ENCODE measurements at regions of chr9 and their contacts with region 1.

Region 1: GRCh38 chr9:32571969-32572899 is 725 bp downstream of the NDUFB6 start:
- DNase-seq: peak; percentile 86

Region 2: DNA sequence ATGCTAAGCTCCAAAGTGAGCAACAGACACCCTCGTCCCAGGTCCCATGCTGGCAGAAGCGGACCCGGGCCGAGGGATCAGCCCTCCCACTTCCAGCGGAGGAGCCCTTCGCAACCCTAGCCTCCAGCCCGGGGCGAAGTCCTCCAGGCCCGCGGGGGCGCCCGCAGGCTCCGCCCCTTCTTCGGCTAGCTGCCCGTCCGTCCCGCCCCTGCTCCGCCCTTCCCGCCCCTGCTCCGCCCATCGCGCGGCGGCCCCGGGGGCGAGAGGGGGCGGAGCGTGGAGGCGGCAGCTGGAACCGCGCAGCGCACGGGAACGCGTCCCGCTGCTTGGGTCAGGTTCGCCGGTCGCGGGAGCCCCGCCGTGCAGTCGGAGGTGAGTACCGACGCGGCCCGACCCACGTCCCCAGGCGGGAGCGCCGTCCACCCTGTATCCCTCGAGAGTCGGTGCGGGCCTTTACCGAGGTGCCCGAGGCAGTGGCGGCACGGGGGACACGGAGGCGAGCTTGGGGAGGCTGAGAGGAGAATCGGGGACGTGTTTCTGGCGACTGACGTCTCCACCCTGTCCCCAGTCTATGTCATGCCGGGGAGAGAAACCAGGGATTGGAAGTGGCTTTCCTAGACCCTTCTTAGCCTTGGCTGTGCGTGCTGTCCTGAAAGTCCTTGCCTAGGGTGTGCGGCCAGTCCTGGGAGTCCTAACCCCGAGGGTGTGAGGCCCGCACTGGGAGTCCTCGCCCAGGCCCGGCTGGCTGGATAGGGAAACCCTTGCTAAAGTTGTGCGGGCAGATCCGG is 187.7 kb before region 1 on chr9 and contains the start of gene ACO1:
- in situ Hi-C with region 1: loop called (anchors 10 kb)
- DNase-seq: peak; percentile 86